PC-3 (cell line): ENCODE measurements at regions of chr10 and their contacts with region 1.

Region 1: GRCh38 chr10:36534471-36535002 is 590.9 kb upstream of the ANKRD30A start:
- DNase-seq: peak; percentile 100
- ATAC-seq: peak; percentile 82
- H3K4me3 ChIP-seq: no peak overlapping the region
- H3K27ac ChIP-seq: peak overlapping the region; percentile 83
- H3K4me1 ChIP-seq: peaks cover 63% of the 10 kb centered on the region
- H3K27me3 ChIP-seq: no peaks in the 10 kb centered on the region
- CTCF ChIP-seq: no peak

Region 2: DNA sequence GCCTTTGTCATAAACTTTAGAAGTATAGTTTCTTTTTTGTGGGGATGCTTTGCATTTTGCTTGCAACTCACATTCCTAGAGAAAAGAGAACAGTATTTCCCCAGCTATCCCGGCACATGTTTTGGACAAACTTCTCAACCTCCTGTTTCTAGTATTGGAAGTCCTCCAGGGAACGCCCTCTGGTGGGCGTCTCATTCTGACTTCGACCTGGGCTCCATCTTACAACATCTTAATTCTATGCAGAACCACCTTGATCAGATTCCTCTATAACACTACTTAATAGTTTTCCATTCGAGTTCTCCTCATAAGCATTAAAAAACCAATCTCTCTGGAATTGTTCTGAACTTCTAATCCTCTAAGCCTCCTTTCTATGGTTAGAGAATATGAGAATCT is 752.9 kb before region 1 on chr10:
- CTCF ChIA-PET with region 1: interaction called, 3 read pairs
- POLR2A ChIA-PET with region 1: no interaction called
- intact Hi-C with region 1: loop called (anchors 1 kb)
- DNase-seq: peak; percentile 72
- ATAC-seq: no peak
- H3K4me3 ChIP-seq: no peak overlapping the region
- H3K27ac ChIP-seq: peak overlapping the region; percentile 72; the same call in 1 of the 2 replicates
- H3K4me1 ChIP-seq: peaks cover 37% of the 10 kb centered on the region
- H3K27me3 ChIP-seq: no peaks in the 10 kb centered on the region
- CTCF ChIP-seq: peak; percentile 72

Region 3: GRCh38 chr10:36126076-36126475 is 408.5 kb before region 1 on chr10:
- CTCF ChIA-PET with region 1: no interaction called
- POLR2A ChIA-PET with region 1: no interaction called
- intact Hi-C with region 1: loop called (anchors 2 kb)
- DNase-seq: peak; percentile 96
- ATAC-seq: peak; percentile 98
- H3K4me3 ChIP-seq: no peak overlapping the region
- H3K27ac ChIP-seq: peak overlapping the region; percentile 55
- H3K4me1 ChIP-seq: peaks cover 24% of the 10 kb centered on the region
- H3K27me3 ChIP-seq: no peaks in the 10 kb centered on the region
- CTCF ChIP-seq: no peak

Region 4: GRCh38 chr10:36462194-36462593 is 72.3 kb before region 1 on chr10:
- CTCF ChIA-PET with region 1: no interaction called
- POLR2A ChIA-PET with region 1: no interaction called
- intact Hi-C with region 1: loop called (anchors 1 kb)
- DNase-seq: peak; percentile 95
- ATAC-seq: no peak
- H3K4me3 ChIP-seq: no peak overlapping the region
- H3K27ac ChIP-seq: no peak overlapping the region
- H3K4me1 ChIP-seq: peaks cover 40% of the 10 kb centered on the region
- H3K27me3 ChIP-seq: no peaks in the 10 kb centered on the region
- CTCF ChIP-seq: no peak

Region 5: GRCh38 chr10:36578306-36578705 is 43.8 kb after region 1 on chr10:
- CTCF ChIA-PET with region 1: interaction called, 4 read pairs
- POLR2A ChIA-PET with region 1: no interaction called
- intact Hi-C with region 1: loop called (anchors 1 kb)
- DNase-seq: peak; percentile 100
- ATAC-seq: peak; percentile 96
- H3K4me3 ChIP-seq: no peak overlapping the region
- H3K27ac ChIP-seq: peak overlapping the region; percentile 84
- H3K4me1 ChIP-seq: peaks cover 19% of the 10 kb centered on the region
- H3K27me3 ChIP-seq: no peaks in the 10 kb centered on the region
- CTCF ChIP-seq: no peak

Region 6: DNA sequence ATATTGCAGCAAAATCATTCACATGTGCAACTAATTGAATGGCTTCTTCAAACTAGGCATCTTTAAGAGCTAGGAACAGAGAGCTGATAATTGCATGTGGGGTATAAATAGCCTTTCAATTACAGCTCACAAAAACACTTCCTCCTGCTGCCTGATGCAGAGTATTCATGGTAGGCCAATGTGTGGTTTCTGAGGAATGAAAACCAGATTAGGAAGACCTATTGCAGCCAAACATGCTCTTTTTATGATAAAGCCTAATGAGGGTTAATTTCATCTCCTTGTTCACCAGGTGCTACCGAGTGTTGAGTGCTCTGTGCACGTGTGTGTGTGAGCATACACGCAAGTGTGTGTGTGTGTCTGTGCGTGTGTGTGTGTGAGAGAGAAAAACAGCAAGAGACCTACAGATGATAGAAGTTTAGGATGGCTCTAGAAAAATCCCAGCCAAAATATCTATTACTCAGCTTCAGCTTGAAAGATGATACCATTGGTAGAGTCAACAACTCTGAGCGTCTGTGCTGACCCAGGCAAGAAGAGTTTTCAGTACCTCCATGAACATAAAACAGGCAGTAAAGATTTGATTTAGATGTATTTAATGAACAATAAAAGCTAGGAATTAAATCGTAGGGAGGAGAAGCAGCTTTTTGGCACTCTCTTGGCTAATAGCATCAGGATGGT is 142.4 kb after region 1 on chr10:
- CTCF ChIA-PET with region 1: interaction called, 3 read pairs
- POLR2A ChIA-PET with region 1: no interaction called
- intact Hi-C with region 1: loop called (anchors 1 kb)
- DNase-seq: peak; percentile 90
- ATAC-seq: peak; percentile 72
- H3K4me3 ChIP-seq: no peak overlapping the region
- H3K27ac ChIP-seq: peak overlapping the region; percentile 47
- H3K4me1 ChIP-seq: peaks cover 47% of the 10 kb centered on the region
- H3K27me3 ChIP-seq: no peaks in the 10 kb centered on the region
- CTCF ChIP-seq: no peak